Head of caudate nucleus (tissue), 42 donors: ENCODE measurements at regions of chr2 and their contacts with region 1.

Region 1: DNA sequence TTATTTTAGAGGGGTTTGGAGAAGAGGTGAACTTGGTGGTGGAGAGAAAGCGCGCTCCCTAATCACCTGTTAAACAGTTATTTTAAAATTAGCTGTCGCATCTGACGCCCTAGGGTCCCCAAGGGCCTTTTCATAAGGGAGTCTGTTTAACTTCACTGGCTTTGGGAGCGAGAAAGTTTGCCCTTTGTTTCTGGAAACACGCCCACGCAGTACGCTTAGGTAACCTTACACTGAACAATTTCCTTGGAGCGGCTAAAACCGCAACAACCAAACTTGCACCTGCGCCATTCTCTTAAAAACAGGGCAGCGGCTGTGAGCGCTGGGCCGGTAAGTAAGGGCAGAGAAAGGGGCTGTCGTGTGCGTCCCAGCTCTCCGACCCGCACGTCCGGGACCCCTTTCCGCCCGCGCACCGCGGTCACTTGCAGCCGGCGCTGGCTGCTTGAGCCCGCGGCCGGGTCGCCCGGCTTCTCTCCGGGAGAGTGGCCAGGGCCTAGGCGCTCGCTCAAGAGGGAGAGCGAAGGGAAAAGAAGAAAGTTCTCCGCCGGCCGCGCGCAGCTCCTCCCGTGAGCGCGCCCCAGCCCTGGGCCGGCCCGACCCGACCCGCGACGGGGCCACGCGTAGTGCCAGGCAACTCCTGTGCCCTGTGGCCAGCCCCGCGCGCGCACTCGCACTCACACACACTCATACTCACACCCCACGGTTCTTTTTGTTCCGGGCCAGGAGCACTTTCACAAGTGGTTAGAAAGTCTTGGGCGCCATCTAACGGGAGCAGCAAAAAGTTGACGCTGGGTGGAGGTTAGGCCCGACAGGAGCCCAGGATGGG is 19.2 kb downstream of the POU3F3 start:
- DNase-seq: peak; percentile 85 to 97 (median 94)

Region 2: DNA sequence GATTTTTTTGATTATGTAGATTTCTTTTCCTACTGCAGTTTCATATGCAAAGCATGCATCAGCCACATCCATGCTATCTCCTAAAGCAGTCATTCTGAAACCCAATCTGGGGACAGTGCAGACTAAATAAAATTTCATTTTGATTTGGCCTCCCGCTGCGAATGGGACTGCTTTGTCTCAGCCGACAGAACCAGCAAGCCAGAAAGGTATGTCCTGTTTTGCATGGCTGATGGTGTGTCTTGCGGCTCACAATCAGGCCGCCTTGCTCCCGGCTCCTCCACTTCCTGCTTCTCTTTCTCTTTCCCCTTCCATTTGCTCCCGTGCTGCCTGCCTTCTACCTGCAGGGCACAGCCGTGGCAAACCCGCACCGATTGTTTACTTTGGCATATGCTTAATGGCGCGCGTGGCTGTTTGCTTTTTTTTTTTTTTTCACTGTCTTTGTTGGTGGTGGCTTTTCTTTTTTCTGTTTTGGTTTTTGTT is 438.7 kb before region 1 on chr2:
- intact Hi-C with region 1: loop called (anchors 5 kb)
- DNase-seq: peak in 40 of 42 donors; percentile 28 to 78 (median 58)

Region 3: DNA sequence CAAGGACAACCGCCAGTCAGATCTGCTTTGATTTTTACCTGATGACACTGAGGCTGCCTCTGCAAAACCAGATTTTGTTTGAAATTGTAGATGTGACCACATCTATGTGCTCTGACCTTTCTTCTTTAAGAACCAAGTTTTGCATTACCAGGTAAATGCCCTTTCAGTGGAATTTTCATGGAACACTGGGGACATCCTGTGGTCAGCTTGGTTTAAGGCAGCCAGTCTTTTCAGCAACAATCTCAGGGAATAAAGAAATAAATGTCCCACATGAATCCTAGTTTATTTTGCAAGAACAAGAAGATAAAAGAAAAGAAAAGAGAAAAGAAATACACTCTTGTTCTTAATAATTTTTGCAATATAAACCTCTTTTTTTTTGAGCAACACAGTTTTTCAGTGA is 71.4 kb after region 1 on chr2:
- intact Hi-C with region 1: loop called (anchors 5 kb)
- DNase-seq: peak in 16 of 42 donors; percentile 21 to 74 (median 40)

Region 4: DNA sequence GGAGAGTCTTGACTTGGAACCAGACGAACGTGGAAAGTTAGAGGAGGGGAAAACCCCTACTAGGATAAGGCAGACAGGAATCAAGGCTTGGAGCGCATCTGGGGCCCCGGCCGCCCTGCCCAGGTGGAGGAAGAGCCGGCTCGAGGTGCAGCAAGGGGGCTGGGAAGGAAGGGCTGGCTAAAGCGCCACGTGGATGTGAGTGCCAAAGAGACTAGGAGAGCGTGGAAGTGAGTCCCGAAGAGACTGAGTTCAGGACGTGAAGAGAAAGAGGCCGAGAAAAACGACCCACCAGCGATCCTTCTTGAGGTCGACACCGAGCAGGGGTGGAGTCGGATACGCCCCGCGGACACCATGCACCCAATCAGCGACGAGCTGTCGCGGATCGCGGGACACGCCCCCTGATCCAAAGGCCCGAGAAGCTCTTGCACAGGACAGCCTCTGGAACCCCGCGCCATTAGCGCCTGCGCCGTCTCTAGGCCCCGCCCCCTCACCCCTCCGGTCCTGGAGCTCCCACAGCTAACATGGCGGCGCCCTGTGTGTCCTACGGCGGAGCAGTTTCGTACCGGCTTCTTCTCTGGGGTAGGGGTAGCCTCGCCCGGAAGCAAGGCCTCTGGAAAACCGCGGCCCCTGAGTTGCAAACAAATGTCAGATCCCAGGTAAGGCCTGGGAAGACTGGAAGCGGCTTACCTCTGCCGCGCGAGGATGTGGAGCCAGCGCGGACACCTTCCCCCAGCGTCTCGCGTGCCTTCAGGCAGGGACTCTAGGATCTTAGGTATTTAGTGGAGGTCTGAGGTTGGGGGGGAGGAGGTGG is 164.7 kb after region 1 on chr2 and contains the start of gene MRPS9:
- intact Hi-C with region 1: loop called (anchors 10 kb)
- DNase-seq: peak; percentile 98 to 100 (median 99)

Region 5: GRCh38 chr2:105072039-105072438 is 199.0 kb after region 1 on chr2:
- intact Hi-C with region 1: no loop called
- DNase-seq: no peak